Activated B cell treated with CpG ODN at 0.5 μM for 24 hours (primary cell): ENCODE measurements at regions of chr9 and their contacts with region 1.

Region 1: GRCh38 chr9:125049212-125050049 is 93.9 kb downstream of the SCAI start:
- DNase-seq: no peak
- ATAC-seq: no peak
- H3K4me3 Mint-ChIP-seq: no peak overlapping the region
- H3K27ac Mint-ChIP-seq: no peak overlapping the region
- H3K4me1 Mint-ChIP-seq: no peaks in the 10 kb centered on the region
- H3K27me3 Mint-ChIP-seq: no peaks in the 10 kb centered on the region
- CTCF ChIP-seq: no peak

Region 2: GRCh38 chr9:124980429-124980828 is 69.0 kb before region 1 on chr9:
- CTCF ChIA-PET with region 1: no interaction called
- POLR2A ChIA-PET with region 1: no interaction called
- intact Hi-C with region 1: loop called (anchors 10 kb)
- DNase-seq: no peak
- ATAC-seq: no peak
- H3K4me3 Mint-ChIP-seq: no peak overlapping the region
- H3K27ac Mint-ChIP-seq: no peak overlapping the region
- H3K4me1 Mint-ChIP-seq: no peaks in the 10 kb centered on the region
- H3K27me3 Mint-ChIP-seq: no peaks in the 10 kb centered on the region
- CTCF ChIP-seq: no peak

Region 3: DNA sequence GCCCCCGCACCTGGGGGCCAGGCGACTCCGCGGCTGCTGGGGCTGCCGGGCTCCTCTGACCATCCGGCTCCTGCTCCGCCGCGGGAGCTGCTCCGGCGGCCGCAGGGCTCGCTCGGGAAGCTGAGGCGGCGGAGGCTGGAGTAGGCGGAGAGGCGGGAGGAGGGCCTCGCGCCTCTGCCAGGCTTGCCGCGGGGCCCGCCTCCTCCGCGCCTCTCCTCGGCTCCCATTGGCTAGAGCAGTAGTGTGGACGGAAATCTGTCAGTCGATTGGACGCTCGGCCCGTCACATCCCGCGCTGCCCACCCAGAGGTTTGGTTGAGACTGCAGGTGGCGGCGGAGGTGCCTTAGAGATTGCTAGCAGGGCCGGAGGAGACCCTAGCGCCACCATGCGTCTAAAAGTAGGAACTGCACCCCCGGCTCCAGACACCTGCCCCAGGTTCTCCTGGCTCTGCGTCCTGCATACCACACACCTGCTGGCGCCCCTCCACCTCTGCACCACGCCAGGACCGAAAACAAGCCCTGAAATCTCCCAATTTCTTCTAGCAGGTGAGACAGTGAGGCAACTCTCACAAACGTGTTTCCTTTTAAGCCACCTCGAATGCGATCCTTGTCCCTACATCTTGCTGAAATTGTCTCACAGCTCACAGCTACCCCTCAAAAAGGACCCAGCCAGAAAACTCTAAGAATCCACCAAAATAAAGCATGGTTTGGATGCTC is 94.1 kb after region 1 on chr9 and contains the start of gene SCAI:
- CTCF ChIA-PET with region 1: no interaction called
- POLR2A ChIA-PET with region 1: no interaction called
- intact Hi-C with region 1: no loop called
- DNase-seq: peak; percentile 90
- ATAC-seq: peak; percentile 99
- H3K4me3 Mint-ChIP-seq: peak within 1 kb of the TSS; percentile 92
- H3K27ac Mint-ChIP-seq: peak within 1 kb of the TSS; percentile 36
- H3K4me1 Mint-ChIP-seq: peaks cover 22% of the 10 kb centered on the region
- H3K27me3 Mint-ChIP-seq: no peaks in the 10 kb centered on the region
- CTCF ChIP-seq: peak; percentile 91
- total RNA-seq, gene SCAI: 10.7 and 11.7 TPM in 2 replicates